PC-9 (cell line): ENCODE measurements at regions of chr1 and their contacts with region 1.

Region 1: DNA sequence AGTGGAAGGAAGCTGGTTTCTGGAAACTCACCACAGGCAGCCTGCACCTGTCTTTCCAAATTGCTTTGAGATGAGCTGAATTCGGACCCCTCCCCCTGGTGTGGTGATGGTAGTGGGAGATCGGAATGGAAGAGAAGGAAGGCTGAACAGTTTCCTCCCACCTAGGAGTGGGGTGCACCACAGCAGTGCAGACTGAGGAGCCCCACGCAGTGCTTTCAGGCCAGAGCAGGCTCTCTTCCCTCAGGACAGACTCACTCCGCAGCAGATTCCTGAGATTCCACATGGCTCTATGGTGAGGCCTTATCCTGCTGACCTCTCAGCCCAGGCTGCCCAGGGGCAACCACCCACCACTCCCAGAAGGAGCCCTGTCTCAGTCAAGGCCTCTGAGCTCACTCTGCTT is 80.9 kb downstream of the ATP1A1 start:
- DNase-seq: peak; percentile 55 to 79
- H3K4me3 ChIP-seq: peak overlapping the region; percentile 27; the same call in 1 of the 2 replicates
- H3K27ac ChIP-seq: peak overlapping the region; percentile 62
- H3K4me1 ChIP-seq: peaks cover 62% of the 10 kb centered on the region
- H3K27me3 ChIP-seq: no peaks in the 10 kb centered on the region
- CTCF ChIP-seq: no peak

Region 2: DNA sequence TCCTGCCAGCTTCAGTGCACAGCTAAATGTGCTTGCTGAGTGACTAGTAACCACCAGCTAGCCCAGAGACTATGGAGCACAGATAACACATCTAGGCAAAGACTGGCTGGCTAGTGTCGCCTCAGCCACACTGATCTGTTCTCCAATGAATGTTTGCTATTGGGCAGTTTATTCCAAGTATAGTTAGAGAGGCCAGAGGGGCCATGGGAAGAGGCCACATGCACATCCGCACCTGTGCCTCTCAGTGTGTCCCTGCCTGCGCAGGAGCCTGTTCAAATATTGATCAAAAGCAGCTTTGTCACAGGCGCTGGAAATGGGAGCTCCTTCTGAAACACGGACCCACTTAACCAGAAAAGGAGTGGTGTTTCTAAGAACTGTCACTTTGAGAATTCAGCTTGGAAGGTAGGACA is 132.1 kb before region 1 on chr1:
- CTCF ChIA-PET with region 1: no interaction called
- POLR2A ChIA-PET with region 1: no interaction called
- intact Hi-C with region 1: no loop called
- DNase-seq: no peak
- H3K4me3 ChIP-seq: no peak overlapping the region
- H3K27ac ChIP-seq: no peak overlapping the region
- H3K4me1 ChIP-seq: peaks cover 12% of the 10 kb centered on the region; the same call in 1 of the 2 replicates
- H3K27me3 ChIP-seq: no peaks in the 10 kb centered on the region
- CTCF ChIP-seq: no peak

Region 3: GRCh38 chr1:117107364-117107763 is 653.5 kb after region 1 on chr1:
- CTCF ChIA-PET with region 1: no interaction called
- POLR2A ChIA-PET with region 1: interaction called, 17 read pairs
- intact Hi-C with region 1: no loop called
- DNase-seq: no peak
- H3K4me3 ChIP-seq: no peak overlapping the region
- H3K27ac ChIP-seq: no peak overlapping the region
- H3K4me1 ChIP-seq: peaks cover 20% of the 10 kb centered on the region
- H3K27me3 ChIP-seq: no peaks in the 10 kb centered on the region
- CTCF ChIP-seq: no peak